ENCODE measurements at regions of chr1 and their contacts with region 1.

Region 1: GRCh38 chr1:218259800-218260199 is 25.3 kb upstream of the RRP15 start:
- DNase-seq: no peak
- H3K4me3 ChIP-seq: no peak overlapping the region
- H3K27ac ChIP-seq: no peak overlapping the region
- H3K4me1 ChIP-seq: no peaks in the 10 kb centered on the region
- H3K27me3 ChIP-seq: no peaks in the 10 kb centered on the region
- CTCF ChIP-seq: no peak
- EP300 ChIP-seq: no peak
- POLR2A ChIP-seq: no peak

Region 2: GRCh38 chr1:218135371-218135770 is 124.4 kb before region 1 on chr1:
- in situ Hi-C with region 1: no loop called
- intact Hi-C with region 1: no loop called
- DNase-seq: no peak
- H3K4me3 ChIP-seq: no peak overlapping the region
- H3K27ac ChIP-seq: no peak overlapping the region
- H3K4me1 ChIP-seq: no peaks in the 10 kb centered on the region
- H3K27me3 ChIP-seq: no peaks in the 10 kb centered on the region
- CTCF ChIP-seq: no peak
- EP300 ChIP-seq: no peak
- POLR2A ChIP-seq: no peak

Region 3: DNA sequence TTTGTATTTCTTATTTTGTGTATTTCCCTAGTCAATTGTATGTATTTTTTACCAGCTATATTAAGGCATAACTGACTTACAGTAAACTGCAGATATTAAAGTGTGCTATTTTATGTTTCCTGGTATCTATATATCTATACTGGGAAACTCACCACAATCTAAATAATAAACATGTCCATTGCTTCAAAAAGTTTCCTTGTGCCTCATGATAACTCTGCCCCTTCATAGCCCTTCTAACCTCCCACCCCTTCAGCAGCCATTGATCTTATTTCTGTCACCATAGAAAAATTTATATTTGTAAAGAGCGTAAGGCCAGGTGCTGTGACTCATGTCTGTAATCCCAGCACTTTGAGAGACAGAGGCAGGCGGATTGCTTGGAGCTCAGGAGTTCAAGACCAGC is 16.0 kb after region 1 on chr1:
- in situ Hi-C with region 1: no loop called
- intact Hi-C with region 1: loop called (anchors 1 kb)
- DNase-seq: no peak
- H3K4me3 ChIP-seq: no peak overlapping the region
- H3K27ac ChIP-seq: no peak overlapping the region
- H3K4me1 ChIP-seq: no peaks in the 10 kb centered on the region
- H3K27me3 ChIP-seq: no peaks in the 10 kb centered on the region
- CTCF ChIP-seq: no peak
- EP300 ChIP-seq: no peak
- POLR2A ChIP-seq: no peak

Region 4: DNA sequence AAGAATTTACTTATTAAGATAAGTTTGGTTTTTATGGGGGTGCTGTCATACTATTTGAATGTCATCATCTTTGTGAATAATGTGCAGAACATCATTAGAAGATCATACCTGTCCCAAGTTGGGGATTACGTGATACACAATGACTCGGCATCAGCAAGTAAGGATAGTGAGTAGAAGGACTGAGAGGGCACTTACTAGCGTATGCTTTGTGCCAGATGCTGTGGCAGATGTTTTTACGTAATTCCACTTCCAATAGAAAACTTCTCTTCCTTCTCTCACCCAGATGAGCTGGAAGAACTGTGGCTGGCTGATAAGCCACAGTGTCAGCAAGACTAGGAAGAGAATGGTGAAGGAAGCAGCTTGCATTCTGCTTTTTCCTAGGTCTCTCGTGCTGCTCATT is 57.3 kb after region 1 on chr1:
- in situ Hi-C with region 1: no loop called
- intact Hi-C with region 1: no loop called
- DNase-seq: no peak
- H3K4me3 ChIP-seq: no peak overlapping the region
- H3K27ac ChIP-seq: no peak overlapping the region
- H3K4me1 ChIP-seq: no peaks in the 10 kb centered on the region
- H3K27me3 ChIP-seq: no peaks in the 10 kb centered on the region
- CTCF ChIP-seq: no peak
- EP300 ChIP-seq: no peak
- POLR2A ChIP-seq: no peak

Region 5: DNA sequence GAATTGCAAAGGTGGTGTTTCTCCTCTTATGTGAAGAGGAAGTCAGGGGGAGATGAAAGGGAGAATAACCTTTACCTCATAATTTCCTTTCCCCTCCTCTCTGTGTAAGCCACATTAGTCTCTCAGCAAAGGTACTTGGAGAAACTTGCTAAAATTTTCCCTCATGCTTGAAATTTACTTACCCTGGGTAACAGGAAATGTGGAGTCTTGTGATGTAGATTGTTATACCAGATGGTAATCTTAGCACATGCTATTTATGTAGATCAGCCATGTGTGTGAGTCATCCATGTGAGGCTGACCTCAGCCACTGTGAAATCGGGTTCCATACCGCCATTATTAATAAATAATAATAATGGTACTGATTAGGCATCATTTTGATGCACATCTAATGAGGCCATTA is 213.7 kb after region 1 on chr1:
- in situ Hi-C with region 1: no loop called
- intact Hi-C with region 1: no loop called
- DNase-seq: no peak
- H3K4me3 ChIP-seq: no peak overlapping the region
- H3K27ac ChIP-seq: no peak overlapping the region
- H3K4me1 ChIP-seq: no peaks in the 10 kb centered on the region
- H3K27me3 ChIP-seq: no peaks in the 10 kb centered on the region
- CTCF ChIP-seq: no peak
- EP300 ChIP-seq: no peak
- POLR2A ChIP-seq: no peak

Region 6: DNA sequence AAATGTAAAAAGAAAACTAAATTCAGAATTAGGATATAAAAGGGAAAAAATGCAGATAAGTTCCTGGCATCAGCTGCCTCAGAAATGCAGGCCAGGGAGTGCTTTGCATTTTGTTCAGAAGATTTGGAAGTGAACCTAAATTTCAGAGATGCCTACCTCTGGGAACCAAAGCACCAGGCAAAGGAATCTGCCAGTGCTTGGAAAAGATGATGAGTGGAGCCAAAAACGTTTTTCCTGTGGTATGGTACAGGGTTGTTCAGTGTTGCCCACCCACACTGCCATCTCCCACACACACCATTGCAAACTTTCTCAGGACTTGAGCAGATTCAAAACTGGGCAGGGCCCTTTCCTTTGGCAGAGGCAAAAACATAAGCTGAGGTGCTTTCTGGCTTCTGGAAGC is 434.8 kb after region 1 on chr1:
- in situ Hi-C with region 1: no loop called
- intact Hi-C with region 1: no loop called
- DNase-seq: no peak
- H3K4me3 ChIP-seq: no peak overlapping the region
- H3K27ac ChIP-seq: no peak overlapping the region
- H3K4me1 ChIP-seq: no peaks in the 10 kb centered on the region
- H3K27me3 ChIP-seq: no peaks in the 10 kb centered on the region
- CTCF ChIP-seq: no peak
- EP300 ChIP-seq: no peak
- POLR2A ChIP-seq: no peak